ENCODE measurements at regions of chr9 and their contacts with region 1.

Region 1: DNA sequence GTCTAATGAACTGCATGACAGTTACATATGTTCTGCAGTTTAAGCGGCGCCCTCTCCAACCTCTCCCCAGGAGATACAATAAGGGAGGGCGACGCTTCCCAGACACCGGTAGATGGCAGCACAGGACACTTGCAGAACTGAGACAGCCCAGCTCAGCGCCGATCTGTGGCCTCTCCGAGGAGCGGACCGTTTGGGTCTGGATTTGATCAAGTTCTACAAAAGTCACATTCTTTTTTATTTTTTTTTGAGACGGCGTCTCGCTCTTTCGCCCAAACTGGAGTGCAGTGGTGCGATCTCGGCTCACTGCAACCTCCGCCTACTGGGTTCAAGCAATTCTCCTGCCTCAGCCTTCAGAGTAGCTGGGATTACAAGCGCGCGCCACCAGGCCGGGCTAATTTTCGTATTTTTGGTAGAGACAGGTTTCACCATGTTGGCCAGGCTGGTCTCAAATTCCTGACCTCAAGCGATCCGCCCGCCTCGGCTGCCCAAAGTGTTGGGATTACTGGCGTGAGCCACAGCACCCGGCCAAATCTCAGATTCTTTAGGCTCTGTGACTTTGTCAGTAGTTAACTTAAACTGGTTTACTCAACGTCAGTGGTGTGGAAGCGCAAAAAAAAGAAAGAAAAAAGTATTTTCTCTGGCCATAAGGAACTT is 1.4 kb upstream of the ATOSB start:
- DNase-seq: peak; percentile 90
- ATAC-seq: peak; percentile 50
- H3K4me3 ChIP-seq: peak overlapping the region; percentile 88
- H3K27ac ChIP-seq: no peak overlapping the region
- H3K4me1 ChIP-seq: peaks cover 14% of the 10 kb centered on the region
- H3K27me3 ChIP-seq: peaks cover 3% of the 10 kb centered on the region
- CTCF ChIP-seq: peak; percentile 97
- POLR2A ChIP-seq: 0 out of 2 replicates have a peak, but pooled peaks have one; percentile 48
- RAD21 ChIP-seq: peak; percentile 95

Region 2: GRCh38 chr9:34869390-34869789 is 247.6 kb before region 1 on chr9:
- CTCF ChIA-PET with region 1: no interaction called
- POLR2A ChIA-PET with region 1: no interaction called
- dilution Hi-C with region 1: no loop called
- in situ Hi-C with region 1: no loop called
- intact Hi-C with region 1: no loop called
- DNase-seq: peak; percentile 19
- ATAC-seq: no peak
- H3K4me3 ChIP-seq: no peak overlapping the region
- H3K27ac ChIP-seq: no peak overlapping the region
- H3K4me1 ChIP-seq: no peaks in the 10 kb centered on the region
- H3K27me3 ChIP-seq: no peaks in the 10 kb centered on the region
- CTCF ChIP-seq: no peak
- POLR2A ChIP-seq: no peak
- RAD21 ChIP-seq: no peak

Region 3: GRCh38 chr9:35161713-35162604 is 44.9 kb after region 1 on chr9 and contains the start of gene UNC13B:
- CTCF ChIA-PET with region 1: no interaction called
- POLR2A ChIA-PET with region 1: no interaction called
- dilution Hi-C with region 1: no loop called
- in situ Hi-C with region 1: no loop called
- intact Hi-C with region 1: loop called (anchors 1 kb)
- DNase-seq: peak; percentile 83
- ATAC-seq: peak; percentile 99
- H3K4me3 ChIP-seq: peak within 1 kb of the TSS; percentile 77
- H3K27ac ChIP-seq: peak within 1 kb of the TSS; percentile 52
- H3K4me1 ChIP-seq: no peaks in the 10 kb centered on the region
- H3K27me3 ChIP-seq: no peaks in the 10 kb centered on the region
- CTCF ChIP-seq: 0 out of 2 replicates have a peak, but pooled peaks have one; percentile 8
- POLR2A ChIP-seq: peak; percentile 45; the same call in 1 of the 2 replicates
- RAD21 ChIP-seq: no peak
- total RNA-seq, gene UNC13B: 12.2 and 14.3 TPM in 2 replicates

Region 4: DNA sequence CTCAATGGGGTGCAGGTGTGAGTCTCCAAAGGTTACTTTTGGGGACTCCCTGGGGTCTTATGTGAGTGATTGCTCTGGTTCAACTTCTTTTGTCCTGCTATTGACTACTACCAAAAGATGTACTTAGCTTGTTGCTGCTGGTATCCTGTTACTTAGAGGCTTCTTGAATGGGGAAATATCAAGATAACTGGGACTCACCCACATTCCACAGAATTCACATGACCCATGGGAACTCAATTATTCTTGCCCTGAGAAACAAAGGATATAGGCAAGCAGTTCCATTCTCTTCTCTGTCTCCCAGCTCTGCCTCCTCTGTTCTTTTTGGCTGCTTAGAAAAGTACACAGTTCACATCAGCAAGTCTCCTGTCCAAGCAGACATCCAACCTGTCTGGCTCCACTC is 150.7 kb after region 1 on chr9:
- CTCF ChIA-PET with region 1: no interaction called
- POLR2A ChIA-PET with region 1: no interaction called
- dilution Hi-C with region 1: no loop called
- in situ Hi-C with region 1: loop called (anchors 10 kb)
- intact Hi-C with region 1: no loop called
- DNase-seq: peak; percentile 15
- ATAC-seq: no peak
- H3K4me3 ChIP-seq: no peak overlapping the region
- H3K27ac ChIP-seq: no peak overlapping the region
- H3K4me1 ChIP-seq: peaks cover 2% of the 10 kb centered on the region; the same call in 1 of the 2 replicates
- H3K27me3 ChIP-seq: no peaks in the 10 kb centered on the region
- CTCF ChIP-seq: no peak
- POLR2A ChIP-seq: no peak
- RAD21 ChIP-seq: no peak

Region 5: GRCh38 chr9:35385042-35385441 is 268.0 kb after region 1 on chr9:
- CTCF ChIA-PET with region 1: interaction called, 6 read pairs
- POLR2A ChIA-PET with region 1: no interaction called
- dilution Hi-C with region 1: no loop called
- in situ Hi-C with region 1: no loop called
- intact Hi-C with region 1: loop called (anchors 1 kb)
- DNase-seq: peak; percentile 78
- ATAC-seq: peak; percentile 96
- H3K4me3 ChIP-seq: no peak overlapping the region
- H3K27ac ChIP-seq: no peak overlapping the region
- H3K4me1 ChIP-seq: no peaks in the 10 kb centered on the region
- H3K27me3 ChIP-seq: no peaks in the 10 kb centered on the region
- CTCF ChIP-seq: peak; percentile 61
- POLR2A ChIP-seq: no peak
- RAD21 ChIP-seq: peak; percentile 64

Region 6: DNA sequence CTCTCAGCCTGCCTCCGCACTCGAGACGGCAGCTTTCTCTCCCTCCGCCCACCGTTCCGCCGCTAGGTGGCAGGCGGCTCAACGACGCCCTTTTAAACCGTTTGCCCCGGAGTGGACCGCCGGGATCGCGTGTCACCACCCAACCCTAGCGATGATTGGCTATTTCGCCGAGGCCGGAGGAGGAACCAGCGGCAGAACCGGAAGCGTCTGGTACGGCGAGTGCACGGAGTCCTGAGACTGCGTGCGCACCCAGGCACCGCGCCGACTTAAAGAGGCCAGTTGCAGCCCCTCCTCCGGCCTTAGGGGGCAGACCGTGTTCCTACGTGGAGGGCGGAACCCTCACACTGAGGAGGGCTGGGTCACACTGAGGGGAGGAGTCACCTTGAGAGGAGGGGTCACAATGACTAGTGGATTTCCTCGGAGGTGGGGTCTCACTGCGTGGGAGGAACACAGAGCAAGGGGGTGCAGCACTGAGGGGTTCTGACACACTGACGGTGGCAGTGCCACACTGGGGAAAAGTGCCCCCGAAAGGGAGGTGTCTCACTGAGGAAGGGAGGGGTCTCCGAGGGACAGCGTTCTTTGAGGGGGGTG is 487.1 kb after region 1 on chr9:
- CTCF ChIA-PET with region 1: interaction called, 3 read pairs
- POLR2A ChIA-PET with region 1: interaction called, 4 read pairs
- dilution Hi-C with region 1: no loop called
- in situ Hi-C with region 1: no loop called
- intact Hi-C with region 1: loop called (anchors 5 kb)
- DNase-seq: peak; percentile 99
- ATAC-seq: peak; percentile 94
- H3K4me3 ChIP-seq: peak overlapping the region; percentile 53
- H3K27ac ChIP-seq: peak overlapping the region; percentile 75
- H3K4me1 ChIP-seq: peaks cover 5% of the 10 kb centered on the region
- H3K27me3 ChIP-seq: no peaks in the 10 kb centered on the region
- CTCF ChIP-seq: peak; percentile 82
- POLR2A ChIP-seq: peak; percentile 85
- RAD21 ChIP-seq: peak; percentile 62